Activated B cell treated with CpG ODN at 0.5 μM for 24 hours (primary cell): ENCODE measurements at regions of chr7 and their contacts with region 1.

Region 1: GRCh38 chr7:74068393-74069085 is 15.1 kb upstream of the LIMK1 start:
- DNase-seq: no peak
- ATAC-seq: no peak
- H3K4me3 Mint-ChIP-seq: no peak overlapping the region
- H3K27ac Mint-ChIP-seq: no peak overlapping the region
- H3K4me1 Mint-ChIP-seq: peaks cover 2% of the 10 kb centered on the region
- H3K27me3 Mint-ChIP-seq: no peaks in the 10 kb centered on the region
- CTCF ChIP-seq: no peak

Region 2: GRCh38 chr7:73557108-73557396 is 511.5 kb before region 1 on chr7:
- CTCF ChIA-PET with region 1: no interaction called
- POLR2A ChIA-PET with region 1: no interaction called
- intact Hi-C with region 1: no loop called
- DNase-seq: peak; percentile 87
- ATAC-seq: peak; percentile 90
- H3K4me3 Mint-ChIP-seq: peak overlapping the region; percentile 90
- H3K27ac Mint-ChIP-seq: peak overlapping the region; percentile 87
- H3K4me1 Mint-ChIP-seq: peaks cover 28% of the 10 kb centered on the region
- H3K27me3 Mint-ChIP-seq: no peaks in the 10 kb centered on the region
- CTCF ChIP-seq: no peak

Region 3: GRCh38 chr7:73885975-73886798 is 182.4 kb before region 1 on chr7:
- CTCF ChIA-PET with region 1: no interaction called
- POLR2A ChIA-PET with region 1: no interaction called
- intact Hi-C with region 1: no loop called
- DNase-seq: no peak
- ATAC-seq: no peak
- H3K4me3 Mint-ChIP-seq: no peak overlapping the region
- H3K27ac Mint-ChIP-seq: no peak overlapping the region
- H3K4me1 Mint-ChIP-seq: no peaks in the 10 kb centered on the region
- H3K27me3 Mint-ChIP-seq: peaks cover 18% of the 10 kb centered on the region
- CTCF ChIP-seq: no peak

Region 4: DNA sequence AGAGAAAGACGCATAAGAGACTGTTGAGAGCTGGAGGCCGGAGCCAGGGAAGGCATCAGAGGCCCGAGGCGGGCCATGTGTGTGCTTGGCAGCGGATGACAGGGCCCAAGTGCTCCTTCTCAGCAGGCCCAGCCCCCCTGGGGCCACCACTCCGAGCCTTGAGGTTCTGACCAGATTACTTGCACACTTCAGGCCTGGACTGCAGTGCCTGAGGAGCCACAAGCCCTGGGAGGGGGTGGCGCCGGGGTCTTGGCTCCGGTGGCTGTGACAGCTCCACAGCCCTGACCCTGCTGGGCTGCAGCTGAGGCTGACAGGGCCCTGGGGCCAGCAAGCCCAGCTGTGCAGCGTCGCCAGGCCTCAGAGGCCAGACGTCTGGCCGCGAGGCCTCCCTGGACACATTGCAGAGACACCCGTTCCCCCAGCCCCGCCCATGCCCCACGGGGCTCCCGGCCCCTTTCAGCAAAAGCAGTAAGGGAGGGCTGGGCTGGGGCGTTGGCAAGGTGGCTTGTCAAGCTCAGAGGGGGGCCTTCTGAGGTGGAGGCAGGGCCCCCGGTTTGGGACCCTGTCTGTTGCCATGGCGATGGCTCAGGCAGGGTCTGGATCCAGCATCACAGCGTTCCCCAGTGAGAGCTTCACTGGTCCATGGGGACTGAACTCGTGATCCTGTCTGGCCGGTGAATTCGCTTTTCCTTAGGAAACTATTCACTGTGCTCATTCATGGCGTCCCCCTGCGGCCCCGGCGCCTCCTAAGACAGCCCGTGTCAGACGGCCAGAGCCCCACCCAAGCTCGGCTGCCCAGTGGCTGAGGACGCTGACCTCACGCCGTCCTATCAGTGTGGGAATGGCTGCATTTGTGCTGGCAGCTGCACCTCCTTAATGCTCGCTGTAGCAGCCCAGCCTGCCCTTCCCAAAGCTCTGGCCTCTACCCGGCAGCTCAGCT is 34.9 kb before region 1 on chr7:
- CTCF ChIA-PET with region 1: no interaction called
- POLR2A ChIA-PET with region 1: no interaction called
- intact Hi-C with region 1: no loop called
- DNase-seq: no peak
- ATAC-seq: no peak
- H3K4me3 Mint-ChIP-seq: no peak overlapping the region
- H3K27ac Mint-ChIP-seq: no peak overlapping the region
- H3K4me1 Mint-ChIP-seq: peaks cover 6% of the 10 kb centered on the region
- H3K27me3 Mint-ChIP-seq: peaks cover 22% of the 10 kb centered on the region
- CTCF ChIP-seq: no peak

Region 5: GRCh38 chr7:74083117-74083876 is 14.8 kb after region 1 on chr7 and contains the start of gene LIMK1:
- CTCF ChIA-PET with region 1: interaction called, 4 read pairs
- POLR2A ChIA-PET with region 1: interaction called, 5 read pairs
- intact Hi-C with region 1: loop called (anchors 2 kb)
- DNase-seq: peak; percentile 86
- ATAC-seq: peak; percentile 95
- H3K4me3 Mint-ChIP-seq: peak within 1 kb of the TSS; percentile 84
- H3K27ac Mint-ChIP-seq: peak within 1 kb of the TSS; percentile 53
- H3K4me1 Mint-ChIP-seq: peaks cover 7% of the 10 kb centered on the region
- H3K27me3 Mint-ChIP-seq: no peaks in the 10 kb centered on the region
- CTCF ChIP-seq: no peak
- total RNA-seq, gene LIMK1: 59.6 and 62.7 TPM in 2 replicates

Region 6: DNA sequence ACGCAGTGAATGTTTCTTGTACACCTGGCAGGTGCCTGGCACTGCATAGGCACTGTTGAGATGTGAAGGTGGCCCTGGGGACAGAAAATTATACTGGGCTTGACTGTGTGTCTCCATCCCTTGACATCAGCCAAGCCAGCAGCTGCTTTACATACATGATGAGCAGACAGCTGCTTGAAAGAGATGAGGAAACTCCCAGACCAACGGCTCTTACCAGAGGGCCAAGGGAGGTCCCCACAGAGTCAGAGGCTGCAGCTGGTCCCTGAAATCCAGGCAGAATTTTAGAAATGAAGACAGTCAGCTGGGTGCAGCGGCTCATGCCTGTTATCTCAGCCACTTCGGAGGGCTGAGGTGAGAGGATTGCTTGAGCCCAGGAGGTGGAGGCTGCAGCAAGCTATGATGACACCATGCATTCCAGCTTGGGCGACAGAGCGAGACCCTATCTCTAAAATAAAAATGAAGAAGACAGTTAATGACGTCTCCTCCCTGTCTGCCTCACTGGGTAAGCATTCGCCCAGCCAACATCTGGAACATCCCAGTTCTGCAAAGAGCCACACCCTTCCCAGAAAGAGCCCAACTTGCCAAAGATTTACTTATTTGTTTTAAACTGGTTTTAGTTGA is 32.6 kb after region 1 on chr7:
- CTCF ChIA-PET with region 1: interaction called, 3 read pairs
- POLR2A ChIA-PET with region 1: interaction called, 7 read pairs
- intact Hi-C with region 1: loop called (anchors 1 kb)
- DNase-seq: peak; percentile 60
- ATAC-seq: peak; percentile 79
- H3K4me3 Mint-ChIP-seq: peak overlapping the region; percentile 70
- H3K27ac Mint-ChIP-seq: peak overlapping the region; percentile 98
- H3K4me1 Mint-ChIP-seq: peaks cover 38% of the 10 kb centered on the region
- H3K27me3 Mint-ChIP-seq: no peaks in the 10 kb centered on the region
- CTCF ChIP-seq: no peak

Region 7: GRCh38 chr7:74149603-74150002 is 81.1 kb after region 1 on chr7:
- CTCF ChIA-PET with region 1: no interaction called
- POLR2A ChIA-PET with region 1: no interaction called
- intact Hi-C with region 1: no loop called
- DNase-seq: no peak
- ATAC-seq: no peak
- H3K4me3 Mint-ChIP-seq: no peak overlapping the region
- H3K27ac Mint-ChIP-seq: no peak overlapping the region
- H3K4me1 Mint-ChIP-seq: peaks cover 4% of the 10 kb centered on the region
- H3K27me3 Mint-ChIP-seq: peaks cover 2% of the 10 kb centered on the region
- CTCF ChIP-seq: no peak

Region 8: DNA sequence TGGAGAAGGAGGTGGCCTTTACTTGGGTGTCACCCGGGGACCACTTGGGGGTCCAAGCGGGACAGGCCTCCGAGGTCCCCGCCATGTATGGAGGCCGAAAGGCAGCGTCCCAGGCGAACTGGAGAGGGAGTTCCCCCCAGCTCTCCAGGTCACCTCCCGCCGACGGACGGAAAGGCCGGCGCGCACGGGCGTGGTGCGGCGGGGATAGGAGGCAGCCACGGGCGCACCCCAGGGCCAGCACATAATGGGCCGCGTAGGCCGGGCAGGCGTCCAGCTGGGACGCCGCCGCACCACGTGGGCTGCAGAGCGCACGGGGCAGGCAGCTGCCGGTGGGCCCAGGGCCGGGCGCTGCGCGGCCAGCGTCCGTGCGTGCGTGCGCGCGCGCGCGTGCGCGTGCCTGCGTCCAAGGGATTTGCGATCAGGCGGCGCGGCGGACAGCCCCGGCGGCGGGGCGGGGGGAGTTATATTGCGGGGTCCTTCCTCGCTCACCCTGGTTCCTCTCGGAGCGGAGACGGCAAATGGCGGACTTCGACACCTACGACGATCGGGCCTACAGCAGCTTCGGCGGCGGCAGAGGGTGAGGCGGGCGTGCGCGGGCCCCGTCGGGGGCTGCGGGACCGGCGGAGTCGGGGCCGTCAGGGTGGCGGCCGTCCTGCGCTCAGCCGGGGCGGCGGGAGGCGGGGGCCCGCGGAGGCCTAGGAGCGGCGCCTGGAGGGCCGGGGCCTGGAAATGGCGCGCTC is 105.5 kb after region 1 on chr7 and contains the start of gene EIF4H:
- CTCF ChIA-PET with region 1: interaction called, 3 read pairs
- POLR2A ChIA-PET with region 1: interaction called, 10 read pairs
- intact Hi-C with region 1: loop called (anchors 1 kb)
- DNase-seq: peak; percentile 99
- ATAC-seq: peak; percentile 80
- H3K4me3 Mint-ChIP-seq: peak within 1 kb of the TSS; percentile 91
- H3K27ac Mint-ChIP-seq: peak within 1 kb of the TSS; percentile 89
- H3K4me1 Mint-ChIP-seq: peaks cover 47% of the 10 kb centered on the region
- H3K27me3 Mint-ChIP-seq: no peaks in the 10 kb centered on the region
- CTCF ChIP-seq: no peak
- total RNA-seq, gene EIF4H: 263 and 280 TPM in 2 replicates

Region 9: GRCh38 chr7:74401137-74401859 is 332.8 kb after region 1 on chr7:
- CTCF ChIA-PET with region 1: interaction called, 30 read pairs
- POLR2A ChIA-PET with region 1: interaction called, 4 read pairs
- intact Hi-C with region 1: loop called (anchors 1 kb)
- DNase-seq: peak; percentile 69
- ATAC-seq: peak; percentile 84
- H3K4me3 Mint-ChIP-seq: no peak overlapping the region
- H3K27ac Mint-ChIP-seq: no peak overlapping the region
- H3K4me1 Mint-ChIP-seq: no peaks in the 10 kb centered on the region
- H3K27me3 Mint-ChIP-seq: no peaks in the 10 kb centered on the region
- CTCF ChIP-seq: no peak